ENCODE measurements at regions of chr1 and their contacts with region 1.

Region 1: GRCh38 chr1:161225534-161226319 is at the start of gene TOMM40L:
- DNase-seq: peak; percentile 97
- ATAC-seq: peak; percentile 98
- H3K4me3 Mint-ChIP-seq: peak within 1 kb of the TSS; percentile 95
- H3K27ac Mint-ChIP-seq: peak within 1 kb of the TSS; percentile 93
- H3K4me1 Mint-ChIP-seq: peaks cover 32% of the 10 kb centered on the region
- H3K27me3 Mint-ChIP-seq: no peaks in the 10 kb centered on the region
- total RNA-seq, gene TOMM40L: 19.4 to 27.6 TPM

Region 2: GRCh38 chr1:161032409-161032808 is 193.3 kb before region 1 on chr1:
- CTCF ChIA-PET with region 1: no interaction called
- DNase-seq: no peak
- ATAC-seq: no peak
- H3K4me3 Mint-ChIP-seq: no peak overlapping the region
- H3K27ac Mint-ChIP-seq: no peak overlapping the region
- H3K4me1 Mint-ChIP-seq: peaks cover 17% of the 10 kb centered on the region
- H3K27me3 Mint-ChIP-seq: no peaks in the 10 kb centered on the region

Region 3: GRCh38 chr1:161185282-161185682 is 40.4 kb before region 1 on chr1:
- CTCF ChIA-PET with region 1: interaction called, 77 read pairs
- DNase-seq: peak; percentile 93
- ATAC-seq: peak; percentile 80
- H3K4me3 Mint-ChIP-seq: peak overlapping the region; percentile 61
- H3K27ac Mint-ChIP-seq: peak overlapping the region; percentile 96
- H3K4me1 Mint-ChIP-seq: peaks cover 75% of the 10 kb centered on the region
- H3K27me3 Mint-ChIP-seq: no peaks in the 10 kb centered on the region

Region 4: GRCh38 chr1:161201828-161202725 is 23.6 kb before region 1 on chr1 and contains the start of gene NDUFS2:
- CTCF ChIA-PET with region 1: interaction called, 89 read pairs
- DNase-seq: peak; percentile 99
- ATAC-seq: peak; percentile 99
- H3K4me3 Mint-ChIP-seq: peak within 1 kb of the TSS; percentile 87
- H3K27ac Mint-ChIP-seq: peak within 1 kb of the TSS; percentile 95
- H3K4me1 Mint-ChIP-seq: peaks cover 64% of the 10 kb centered on the region
- H3K27me3 Mint-ChIP-seq: no peaks in the 10 kb centered on the region
- total RNA-seq, gene NDUFS2: 69.4 to 83.9 TPM

Region 5: DNA sequence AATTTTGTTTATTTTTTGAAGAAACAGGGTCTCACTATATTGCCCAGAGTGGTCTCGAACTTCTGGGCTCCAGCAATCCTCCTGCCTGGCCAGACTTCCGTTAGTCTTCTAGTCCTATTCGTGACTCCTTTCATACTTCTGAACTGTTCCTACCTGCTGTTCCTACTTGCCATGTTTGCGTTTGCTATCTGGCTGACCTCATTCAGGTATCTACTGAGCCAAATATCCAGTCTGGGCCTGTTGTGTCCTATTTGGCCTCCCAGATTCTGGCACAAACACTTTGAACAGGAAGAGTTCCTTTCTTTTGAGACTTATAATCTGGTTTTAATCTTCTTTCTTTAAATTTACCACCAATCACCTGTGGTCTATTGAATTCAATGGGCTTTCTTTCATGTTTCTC is 19.2 kb after region 1 on chr1:
- CTCF ChIA-PET with region 1: interaction called, 11 read pairs
- DNase-seq: no peak
- ATAC-seq: no peak
- H3K4me3 Mint-ChIP-seq: no peak overlapping the region
- H3K27ac Mint-ChIP-seq: no peak overlapping the region
- H3K4me1 Mint-ChIP-seq: no peaks in the 10 kb centered on the region
- H3K27me3 Mint-ChIP-seq: peaks cover 11% of the 10 kb centered on the region

Region 6: GRCh38 chr1:161305867-161306519 is 80.3 kb after region 1 on chr1:
- CTCF ChIA-PET with region 1: interaction called, 34 read pairs
- DNase-seq: peak; percentile 92
- ATAC-seq: peak; percentile 96
- H3K4me3 Mint-ChIP-seq: peak overlapping the region; percentile 99
- H3K27ac Mint-ChIP-seq: peak overlapping the region; percentile 90
- H3K4me1 Mint-ChIP-seq: peaks cover 32% of the 10 kb centered on the region
- H3K27me3 Mint-ChIP-seq: no peaks in the 10 kb centered on the region

Region 7: DNA sequence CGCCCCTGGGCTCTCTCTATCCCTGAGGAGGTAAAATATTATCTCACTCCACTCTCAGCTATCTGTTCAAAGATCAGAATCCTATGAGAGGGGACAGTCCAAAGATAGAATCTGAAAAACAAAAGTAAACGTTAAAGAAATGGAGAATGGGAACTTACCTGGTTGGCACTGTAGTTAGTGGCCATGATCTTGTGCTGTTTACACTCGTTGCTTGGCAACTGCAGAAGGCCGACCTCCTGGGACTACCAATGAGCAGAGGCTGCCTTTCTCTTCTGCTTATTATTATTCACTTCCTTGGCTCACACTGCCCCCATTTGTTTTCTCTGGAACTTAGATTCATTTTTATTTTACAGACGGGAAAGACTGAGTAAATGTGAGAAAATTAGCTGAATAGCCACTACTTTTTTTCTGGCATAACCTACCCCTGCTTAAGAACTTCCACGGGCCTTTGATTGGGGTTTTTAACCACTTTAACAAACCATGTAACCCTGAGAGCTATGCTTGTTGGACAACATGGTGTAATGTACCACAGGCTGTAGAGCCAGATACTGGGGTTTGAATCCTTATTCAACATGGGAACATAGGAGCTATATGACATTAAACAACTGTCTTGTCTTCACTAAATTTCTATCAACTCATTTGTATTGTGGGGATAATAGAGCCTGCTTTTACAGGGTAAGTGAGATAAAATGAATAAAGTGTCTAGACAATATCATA is 142.1 kb after region 1 on chr1 and contains the start of gene CFAP126:
- CTCF ChIA-PET with region 1: interaction called, 25 read pairs
- DNase-seq: peak; percentile 78
- ATAC-seq: peak; percentile 99
- H3K4me3 Mint-ChIP-seq: no peak within 1 kb of the TSS
- H3K27ac Mint-ChIP-seq: peak within 1 kb of the TSS; percentile 38
- H3K4me1 Mint-ChIP-seq: peaks cover 17% of the 10 kb centered on the region
- H3K27me3 Mint-ChIP-seq: no peaks in the 10 kb centered on the region
- total RNA-seq, gene CFAP126: not detected

Region 8: GRCh38 chr1:161389691-161390558 is 164.2 kb after region 1 on chr1:
- CTCF ChIA-PET with region 1: interaction called, 215 read pairs
- DNase-seq: peak; percentile 97
- ATAC-seq: peak; percentile 96
- H3K4me3 Mint-ChIP-seq: peak overlapping the region; percentile 91
- H3K27ac Mint-ChIP-seq: peak overlapping the region; percentile 98
- H3K4me1 Mint-ChIP-seq: peaks cover 38% of the 10 kb centered on the region
- H3K27me3 Mint-ChIP-seq: no peaks in the 10 kb centered on the region

Measured in activated CD8-positive, alpha-beta memory T cell treated with anti-CD3 and anti-CD28 coated beads, Interleukin-2, amount 10 ng/mL, durations not matched to agents 7 days and 5 days (primary cell).